Posterior cingulate gyrus (tissue), 11 donors: ENCODE measurements at regions of chr2 and their contacts with region 1.

Region 1: DNA sequence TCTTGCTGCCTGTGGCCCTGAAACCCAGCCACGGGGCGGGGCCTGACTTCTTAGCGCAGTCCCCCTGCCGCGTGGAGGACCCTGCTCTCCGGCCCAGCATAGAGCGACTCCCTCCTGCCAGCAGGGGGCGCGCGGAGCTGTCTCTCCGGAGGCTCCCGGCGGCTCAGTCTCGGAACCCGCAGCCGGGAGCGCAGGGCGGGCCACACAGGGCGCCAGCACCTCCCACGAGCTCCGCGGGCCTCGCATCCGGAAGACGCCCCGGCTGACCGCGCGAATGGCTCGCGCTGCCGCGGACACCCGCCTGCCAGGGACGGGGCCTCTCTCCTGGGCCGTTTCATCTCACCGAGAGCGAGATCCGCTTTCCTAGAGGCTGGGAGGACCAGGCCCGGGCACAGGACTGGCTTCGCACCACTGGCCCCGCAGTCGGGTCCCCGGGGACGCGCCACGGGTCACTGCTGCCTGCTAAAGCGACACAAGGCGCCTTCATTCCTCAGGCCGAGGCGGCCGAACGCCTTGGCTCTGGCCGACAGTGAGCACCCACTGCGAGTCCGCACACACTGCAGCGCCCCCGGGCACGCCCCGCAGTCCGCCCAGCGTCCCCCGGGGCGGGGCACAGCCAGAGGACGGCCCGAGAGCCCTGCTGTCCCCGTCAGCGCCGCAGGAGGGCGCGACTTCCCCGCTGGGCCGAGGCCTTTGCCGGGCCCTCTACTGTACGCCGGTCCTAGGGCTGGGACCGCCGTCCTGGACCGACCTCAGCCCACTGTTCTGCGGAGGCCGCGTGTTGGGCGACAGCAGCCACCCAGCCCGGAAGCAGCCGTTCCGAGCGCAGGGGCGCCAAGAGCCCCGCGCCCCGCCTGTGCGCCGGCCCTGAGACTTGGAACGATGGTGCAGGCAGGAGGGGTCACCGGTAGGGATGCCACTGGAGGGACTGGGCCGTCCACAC is 39.0 kb upstream of the ARHGEF4 start:
- DNase-seq: peak; percentile 82 to 98 (median 92)

Region 2: GRCh38 chr2:130836501-130837174 is 38.9 kb after region 1 on chr2 and contains the start of gene ARHGEF4:
- intact Hi-C with region 1: loop called (anchors 1 kb)
- DNase-seq: peak in 7 of 10 donors; percentile 33 to 90 (median 57)

Region 3: GRCh38 chr2:130873700-130874346 is 76.1 kb after region 1 on chr2:
- intact Hi-C with region 1: loop called (anchors 1 kb)
- DNase-seq: peak in 8 of 10 donors; percentile 64 to 96 (median 82)

Region 4: GRCh38 chr2:130920415-130921163 is 122.8 kb after region 1 on chr2:
- intact Hi-C with region 1: loop called (anchors 1 kb)
- DNase-seq: peak; percentile 69 to 97 (median 90)

Region 5: DNA sequence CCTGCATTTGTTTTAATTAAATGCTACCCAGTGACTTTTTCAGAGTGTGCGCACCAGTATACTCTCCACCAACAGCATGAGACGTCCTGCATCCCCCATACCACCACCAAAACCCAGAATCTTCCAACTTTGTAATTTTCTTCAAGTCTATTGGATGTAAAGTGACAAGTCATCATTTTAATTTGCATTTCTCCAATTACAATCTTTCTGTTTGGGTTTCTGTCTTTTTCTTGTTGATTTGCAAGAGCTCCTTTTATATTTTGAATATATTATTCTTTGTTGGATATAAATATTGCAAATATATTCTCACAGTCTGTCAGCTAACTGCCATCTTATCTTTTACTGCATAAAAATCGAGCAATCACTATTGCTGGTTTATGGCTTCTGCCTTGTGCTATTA is 198.9 kb after region 1 on chr2:
- intact Hi-C with region 1: no loop called
- DNase-seq: no peak

Region 6: DNA sequence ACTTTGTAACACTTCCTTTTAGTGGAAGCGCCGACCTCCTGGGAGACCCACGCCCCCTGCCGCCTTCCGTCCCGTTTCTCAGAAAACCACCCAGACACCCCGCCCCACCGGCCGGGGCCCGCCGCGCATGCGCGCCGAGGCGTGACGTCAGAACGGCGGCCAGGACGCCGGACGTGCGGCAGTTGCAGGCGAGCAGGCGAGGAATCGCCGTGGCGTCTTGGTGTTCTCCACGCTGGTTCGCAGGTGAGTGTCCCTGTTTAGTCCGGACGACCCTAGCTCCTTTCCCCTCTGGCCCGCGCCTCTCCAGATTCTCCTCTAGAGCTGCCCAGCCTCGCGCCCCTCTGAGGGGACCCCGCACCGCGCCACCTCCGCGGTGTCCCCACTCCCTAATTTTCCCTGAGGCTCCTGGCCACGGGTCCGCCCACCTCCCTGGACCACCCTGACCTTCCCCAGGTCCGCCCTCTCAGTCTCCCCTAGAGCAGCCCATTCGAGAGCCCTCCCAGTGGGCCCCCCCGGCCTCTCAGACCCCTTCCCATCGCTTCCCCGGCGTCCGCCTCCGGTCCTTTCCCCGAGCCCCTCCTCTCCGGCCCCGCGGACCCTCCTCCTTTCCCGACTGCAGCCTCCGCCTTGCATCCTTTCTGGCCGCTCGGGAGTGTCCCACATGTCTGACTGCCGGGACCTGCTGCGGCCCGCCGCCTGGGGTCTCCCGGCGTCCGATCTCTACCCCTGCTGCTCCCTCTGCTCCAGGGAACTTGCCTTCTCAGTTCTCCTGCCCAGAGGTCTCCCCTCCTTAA is 307.6 kb after region 1 on chr2 and contains the start of gene PLEKHB2:
- intact Hi-C with region 1: loop called (anchors 5 kb)
- DNase-seq: peak; percentile 88 to 99 (median 93)